ENCODE measurements at regions of chr4 and their contacts with region 1.

Region 1: GRCh38 chr4:22688236-22688635 is 4.5 kb upstream of the GBA3 start:
- DNase-seq: no peak
- ATAC-seq: no peak
- H3K4me3 ChIP-seq: no peak overlapping the region
- H3K4me3 Mint-ChIP-seq: no peak overlapping the region
- H3K27ac ChIP-seq: no peak overlapping the region
- H3K27ac Mint-ChIP-seq: no peak overlapping the region
- H3K4me1 ChIP-seq: no peaks in the 10 kb centered on the region
- H3K4me1 Mint-ChIP-seq: no peaks in the 10 kb centered on the region
- H3K27me3 ChIP-seq: no peaks in the 10 kb centered on the region
- H3K27me3 Mint-ChIP-seq: peaks cover 0 to 5% of the 10 kb centered on the region in 2 donors
- CTCF ChIP-seq: no peak

Region 2: GRCh38 chr4:21790438-21791029 is 897.7 kb before region 1 on chr4:
- intact Hi-C with region 1: loop called (anchors 1 kb)
- DNase-seq: peak in 1 of 2 donors; percentile 33
- ATAC-seq: no peak
- H3K4me3 ChIP-seq: no peak overlapping the region
- H3K4me3 Mint-ChIP-seq: no peak overlapping the region
- H3K27ac ChIP-seq: no peak overlapping the region
- H3K27ac Mint-ChIP-seq: no peak overlapping the region
- H3K4me1 ChIP-seq: no peaks in the 10 kb centered on the region
- H3K4me1 Mint-ChIP-seq: no peaks in the 10 kb centered on the region
- H3K27me3 ChIP-seq: no peaks in the 10 kb centered on the region
- H3K27me3 Mint-ChIP-seq: no peaks in the 10 kb centered on the region
- CTCF ChIP-seq: peak; percentile 31

Region 3: GRCh38 chr4:22410645-22411247 is 277.5 kb before region 1 on chr4:
- intact Hi-C with region 1: loop called (anchors 1 kb)
- DNase-seq: peak in 1 of 2 donors; percentile 21
- ATAC-seq: no peak
- H3K4me3 ChIP-seq: no peak overlapping the region
- H3K4me3 Mint-ChIP-seq: no peak overlapping the region
- H3K27ac ChIP-seq: no peak overlapping the region
- H3K27ac Mint-ChIP-seq: no peak overlapping the region
- H3K4me1 ChIP-seq: no peaks in the 10 kb centered on the region
- H3K4me1 Mint-ChIP-seq: no peaks in the 10 kb centered on the region
- H3K27me3 ChIP-seq: no peaks in the 10 kb centered on the region
- H3K27me3 Mint-ChIP-seq: no peaks in the 10 kb centered on the region
- CTCF ChIP-seq: peak; percentile 86